Activated CD8-positive, alpha-beta memory T cell treated with anti-CD3 and anti-CD28 coated beads, Interleukin-2, amount 10 ng/mL, durations not matched to agents 7 days and 5 days (primary cell): ENCODE measurements at regions of chr15 and their contacts with region 1.

Region 1: GRCh38 chr15:50003786-50004334 is 115.2 kb downstream of the ATP8B4 start:
- DNase-seq: peak; percentile 86
- ATAC-seq: peak; percentile 99
- H3K4me3 Mint-ChIP-seq: no peak overlapping the region
- H3K27ac Mint-ChIP-seq: peak overlapping the region; percentile 80
- H3K4me1 Mint-ChIP-seq: peaks cover 17% of the 10 kb centered on the region
- H3K27me3 Mint-ChIP-seq: no peaks in the 10 kb centered on the region

Region 2: DNA sequence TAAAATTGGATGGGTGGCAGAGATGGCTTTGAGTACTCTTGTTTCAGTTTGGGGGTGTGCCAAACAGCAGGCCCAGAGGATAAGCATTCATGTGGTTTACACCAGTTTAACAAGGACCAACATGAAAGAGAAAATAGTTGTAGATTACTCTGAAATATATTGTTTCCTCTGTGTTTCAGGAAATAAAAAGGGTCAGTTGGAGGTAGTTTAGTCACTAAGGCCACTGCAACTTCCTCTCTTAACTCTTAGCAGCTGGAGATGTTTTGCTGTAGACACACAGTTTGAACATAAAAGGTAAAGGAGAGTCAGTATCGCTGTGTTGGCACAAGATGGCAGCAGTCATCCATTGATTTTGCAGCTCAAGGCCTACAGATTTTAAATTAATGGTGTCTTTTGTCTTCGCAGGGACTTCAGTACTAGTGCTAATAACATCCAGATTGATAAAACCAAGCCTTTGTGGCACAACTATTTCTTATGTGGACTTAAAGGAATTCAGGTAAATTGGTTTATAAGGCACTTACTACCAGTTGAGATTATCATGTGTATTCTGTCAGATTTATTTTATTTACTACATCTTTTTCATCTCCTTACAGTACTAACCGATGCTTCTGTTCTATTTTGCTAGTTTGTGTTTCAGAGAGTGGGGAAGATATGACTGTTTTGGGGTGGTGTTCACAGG is 768.3 kb before region 1 on chr15:
- CTCF ChIA-PET with region 1: interaction called, 15 read pairs
- DNase-seq: peak; percentile 74
- ATAC-seq: peak; percentile 94
- H3K4me3 Mint-ChIP-seq: no peak overlapping the region
- H3K27ac Mint-ChIP-seq: peak overlapping the region; percentile 74
- H3K4me1 Mint-ChIP-seq: peaks cover 25% of the 10 kb centered on the region
- H3K27me3 Mint-ChIP-seq: no peaks in the 10 kb centered on the region

Region 3: GRCh38 chr15:49990835-49991545 is 12.9 kb before region 1 on chr15:
- CTCF ChIA-PET with region 1: interaction called, 15 read pairs
- DNase-seq: no peak
- ATAC-seq: no peak
- H3K4me3 Mint-ChIP-seq: no peak overlapping the region
- H3K27ac Mint-ChIP-seq: no peak overlapping the region
- H3K4me1 Mint-ChIP-seq: peaks cover 2% of the 10 kb centered on the region
- H3K27me3 Mint-ChIP-seq: no peaks in the 10 kb centered on the region